Heart right ventricle (tissue), 16 donors: ENCODE measurements at regions of chr1 and their contacts with region 1.

Region 1: GRCh38 chr1:247078261-247079140 is at the start of gene ZNF670:
- DNase-seq: peak; percentile 94 to 96
- ATAC-seq: peak; percentile 99 to 100 (median 100)
- H3K4me3 ChIP-seq: peak within 1 kb of the TSS; percentile 78 to 95 (median 91)
- H3K27ac ChIP-seq: peak within 1 kb of the TSS in 9 of 10 donors; percentile 73 to 89 (median 77)
- H3K4me1 ChIP-seq: peaks cover 0 to 21% (median 13%) of the 10 kb centered on the region in 9 donors
- H3K27me3 ChIP-seq: no peaks in the 10 kb centered on the region
- CTCF ChIP-seq: peak in 1 of 9 donors; percentile 14
- total RNA-seq, gene ZNF670: 0.42 to 1.6 (median 1.3) TPM

Region 2: DNA sequence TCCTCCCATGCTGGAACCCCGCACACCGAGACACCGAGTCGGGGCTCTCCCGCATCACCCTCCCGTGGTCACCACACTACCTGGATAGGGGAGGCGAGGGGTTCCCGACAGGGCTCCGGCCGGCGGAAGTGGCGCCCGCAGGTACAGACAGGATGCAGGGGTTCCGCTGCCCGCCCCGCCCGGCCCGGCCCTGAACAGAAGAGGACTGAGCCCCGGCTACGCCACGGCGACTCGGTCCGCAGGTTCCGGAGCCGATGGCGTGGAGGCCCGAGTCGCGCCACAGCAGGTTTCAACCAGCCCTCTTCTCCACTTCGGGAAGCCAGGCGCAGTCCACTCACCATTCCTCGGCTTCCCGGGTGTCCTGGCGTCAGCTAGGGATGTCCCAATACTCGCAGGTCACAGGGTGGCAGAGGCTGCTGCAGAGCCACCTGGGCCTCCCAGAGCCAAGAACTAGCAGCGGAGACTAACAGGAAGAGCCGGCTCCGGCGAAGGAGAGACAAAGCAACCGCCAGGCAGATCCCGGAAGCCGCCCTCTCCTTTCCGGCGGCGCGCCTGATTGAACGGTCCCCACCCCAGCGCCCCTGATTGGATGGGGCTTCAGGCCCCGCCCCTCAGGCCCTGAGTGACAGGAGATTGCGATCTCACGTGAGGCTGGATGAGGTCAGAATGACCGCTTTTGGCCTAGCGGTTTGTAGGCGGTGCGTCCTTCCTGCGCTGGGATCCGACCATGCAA is 25.5 kb after region 1 on chr1 and contains the start of gene ZNF669:
- intact Hi-C with region 1: loop called in 1 of 10 experiments (anchors 2 kb)
- DNase-seq: peak; percentile 97
- ATAC-seq: peak; percentile 100
- H3K4me3 ChIP-seq: peak within 1 kb of the TSS; percentile 64 to 95 (median 90)
- H3K27ac ChIP-seq: peak within 1 kb of the TSS in 9 of 10 donors; percentile 76 to 91 (median 84)
- H3K4me1 ChIP-seq: peaks cover 0 to 21% (median 14%) of the 10 kb centered on the region in 9 donors
- H3K27me3 ChIP-seq: no peaks in the 10 kb centered on the region
- CTCF ChIP-seq: no peak
- total RNA-seq, gene ZNF669: 2.1 to 4.7 (median 3.5) TPM

Region 3: GRCh38 chr1:247111700-247112478 is 33.4 kb after region 1 on chr1:
- intact Hi-C with region 1: loop called in 1 of 10 experiments (anchors 5 kb)
- DNase-seq: peak; percentile 66 to 80
- ATAC-seq: peak; percentile 88 to 95 (median 93)
- H3K4me3 ChIP-seq: peak overlapping the region; percentile 65 to 86 (median 72)
- H3K27ac ChIP-seq: peak overlapping the region; percentile 13 to 89 (median 81)
- H3K4me1 ChIP-seq: peaks cover 3 to 20% (median 15%) of the 10 kb centered on the region in 9 donors
- H3K27me3 ChIP-seq: peaks cover 0 to 36% (median 0%) of the 10 kb centered on the region in 7 donors
- CTCF ChIP-seq: no peak

Region 4: GRCh38 chr1:247172996-247173395 is 94.5 kb after region 1 on chr1:
- intact Hi-C with region 1: no loop called
- DNase-seq: no peak
- ATAC-seq: no peak
- H3K4me3 ChIP-seq: no peak overlapping the region
- H3K27ac ChIP-seq: no peak overlapping the region
- H3K4me1 ChIP-seq: peaks cover 0 to 16% (median 0%) of the 10 kb centered on the region in 9 donors
- H3K27me3 ChIP-seq: no peaks in the 10 kb centered on the region
- CTCF ChIP-seq: no peak